Calu3 (cell line): ENCODE measurements at regions of chrX and their contacts with region 1.

Region 1: GRCh38 chrX:84046403-84046984 is 141.5 kb downstream of the RPS6KA6 start:
- DNase-seq: peak; percentile 32
- H3K4me3 Mint-ChIP-seq: no peak overlapping the region
- H3K27ac Mint-ChIP-seq: no peak overlapping the region
- H3K4me1 Mint-ChIP-seq: no peaks in the 10 kb centered on the region
- H3K27me3 Mint-ChIP-seq: no peaks in the 10 kb centered on the region
- CTCF ChIP-seq: peak; percentile 39

Region 2: DNA sequence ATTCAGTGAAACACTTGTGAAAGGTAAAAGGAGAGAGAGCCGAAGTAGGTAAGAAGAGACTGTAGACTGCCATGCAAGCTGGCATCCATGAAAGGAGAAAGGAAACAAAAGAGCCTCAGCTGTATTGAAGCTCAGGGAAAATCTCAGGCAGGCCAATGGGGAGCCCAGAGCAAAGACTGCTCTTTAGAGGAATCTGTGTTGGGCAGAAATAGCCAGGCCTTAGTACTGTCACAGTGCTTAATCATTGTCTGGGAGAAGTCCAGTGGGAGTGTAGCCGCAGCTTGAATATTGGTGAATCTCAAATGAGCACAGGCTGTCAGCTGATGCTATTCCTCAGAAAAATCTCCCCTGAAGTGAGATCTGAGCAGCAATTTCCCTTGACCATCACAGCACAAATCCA is 157.9 kb before region 1 on chrX:
- CTCF ChIA-PET with region 1: no interaction called
- intact Hi-C with region 1: no loop called
- DNase-seq: no peak
- H3K4me3 Mint-ChIP-seq: no peak overlapping the region
- H3K27ac Mint-ChIP-seq: no peak overlapping the region
- H3K4me1 Mint-ChIP-seq: no peaks in the 10 kb centered on the region
- H3K27me3 Mint-ChIP-seq: no peaks in the 10 kb centered on the region
- CTCF ChIP-seq: no peak

Region 3: GRCh38 chrX:83997781-83998180 is 48.7 kb before region 1 on chrX:
- CTCF ChIA-PET with region 1: no interaction called
- intact Hi-C with region 1: no loop called
- DNase-seq: no peak
- H3K4me3 Mint-ChIP-seq: no peak overlapping the region
- H3K27ac Mint-ChIP-seq: no peak overlapping the region
- H3K4me1 Mint-ChIP-seq: no peaks in the 10 kb centered on the region
- H3K27me3 Mint-ChIP-seq: no peaks in the 10 kb centered on the region
- CTCF ChIP-seq: no peak

Region 4: GRCh38 chrX:84108584-84108983 is 62.1 kb after region 1 on chrX:
- CTCF ChIA-PET with region 1: no interaction called
- intact Hi-C with region 1: no loop called
- DNase-seq: no peak
- H3K4me3 Mint-ChIP-seq: no peak overlapping the region
- H3K27ac Mint-ChIP-seq: no peak overlapping the region
- H3K4me1 Mint-ChIP-seq: no peaks in the 10 kb centered on the region
- H3K27me3 Mint-ChIP-seq: no peaks in the 10 kb centered on the region
- CTCF ChIP-seq: no peak

Region 5: DNA sequence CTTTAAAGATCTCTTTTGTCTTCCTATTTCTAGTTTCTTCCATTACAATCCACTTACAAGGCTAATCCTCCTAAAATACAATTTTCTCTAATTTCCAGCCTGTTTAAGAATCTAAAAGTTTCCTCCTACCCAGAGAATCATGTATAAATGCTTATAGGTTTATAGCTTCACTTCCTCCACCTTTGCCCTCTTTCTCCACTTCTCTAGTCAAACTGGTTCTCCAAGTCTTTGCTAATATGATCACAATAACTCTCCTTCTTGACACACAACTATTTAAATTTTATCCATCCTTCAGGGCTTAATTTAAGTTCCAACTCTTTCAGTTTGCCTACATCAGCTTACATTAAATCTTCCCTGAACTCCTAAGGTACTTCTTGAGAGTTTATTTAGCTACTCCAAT is 72.3 kb after region 1 on chrX:
- CTCF ChIA-PET with region 1: no interaction called
- intact Hi-C with region 1: loop called (anchors 5 kb)
- DNase-seq: peak; percentile 16
- H3K4me3 Mint-ChIP-seq: peak overlapping the region; percentile 43
- H3K27ac Mint-ChIP-seq: peak overlapping the region; percentile 79
- H3K4me1 Mint-ChIP-seq: peaks cover 15% of the 10 kb centered on the region
- H3K27me3 Mint-ChIP-seq: no peaks in the 10 kb centered on the region
- CTCF ChIP-seq: no peak

Region 6: DNA sequence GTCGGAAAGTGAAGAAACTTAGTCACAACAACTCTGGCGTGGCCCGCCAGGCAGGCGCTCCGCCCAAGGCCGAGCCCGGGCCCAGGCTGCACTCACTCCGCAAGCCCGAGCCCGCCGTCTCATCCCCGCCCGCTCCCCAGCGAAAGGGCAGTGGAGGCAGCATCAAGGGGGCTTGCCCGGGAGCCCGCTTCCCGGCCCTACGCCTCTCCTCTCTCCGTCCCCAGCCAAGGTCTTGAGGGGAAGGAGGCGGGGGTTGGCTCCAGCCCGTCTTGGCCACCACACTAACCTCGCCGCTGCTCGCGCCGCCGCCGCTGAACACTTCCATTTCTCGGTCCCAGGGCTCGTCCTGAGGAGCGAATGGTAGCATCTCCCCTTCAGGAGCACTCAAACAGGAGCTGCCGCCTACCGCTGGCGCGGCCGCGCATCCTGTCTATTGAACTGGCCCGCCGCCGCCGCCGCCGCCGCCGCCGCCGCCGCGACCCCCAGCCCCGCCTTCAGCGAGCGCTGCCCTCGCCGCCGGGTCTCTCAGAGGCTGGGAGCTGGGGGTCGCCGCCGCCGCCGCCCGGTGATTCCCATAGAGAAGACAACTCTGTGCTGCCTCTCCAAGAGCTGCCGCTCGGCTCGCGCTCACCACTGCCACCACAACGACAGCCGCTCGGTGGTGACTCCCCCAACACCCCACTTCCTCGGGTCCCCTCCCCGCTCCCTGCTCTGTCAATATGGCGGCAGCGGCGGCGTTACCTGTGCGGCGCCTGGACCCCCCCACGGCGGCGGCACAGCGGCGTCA is 141.2 kb after region 1 on chrX and contains the start of gene RPS6KA6:
- CTCF ChIA-PET with region 1: interaction called, 4 read pairs
- intact Hi-C with region 1: loop called (anchors 2 kb)
- DNase-seq: peak; percentile 34
- H3K4me3 Mint-ChIP-seq: peak within 1 kb of the TSS; percentile 76
- H3K27ac Mint-ChIP-seq: peak within 1 kb of the TSS; percentile 50
- H3K4me1 Mint-ChIP-seq: no peaks in the 10 kb centered on the region
- H3K27me3 Mint-ChIP-seq: no peaks in the 10 kb centered on the region
- CTCF ChIP-seq: no peak
- total RNA-seq, gene RPS6KA6: 3.0 and 3.8 TPM in 2 replicates

Region 7: DNA sequence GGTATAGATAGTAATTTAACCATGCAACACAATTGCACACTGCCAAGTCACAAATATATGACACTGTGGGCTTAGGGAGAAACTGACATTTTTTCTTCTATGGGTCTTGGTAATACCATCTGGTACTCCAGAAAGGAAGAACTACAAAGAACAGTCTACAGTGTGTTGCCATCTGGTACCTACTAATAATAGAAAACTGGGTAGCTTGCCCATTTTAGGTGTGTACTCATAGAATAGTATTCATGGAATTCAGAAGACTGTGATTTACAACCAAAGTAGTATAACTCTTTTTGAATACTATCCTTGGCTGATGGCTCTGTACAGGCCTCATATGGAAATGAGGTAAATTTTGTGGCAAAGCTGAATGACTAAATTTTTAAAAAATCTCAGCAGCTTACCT is 274.1 kb after region 1 on chrX:
- CTCF ChIA-PET with region 1: no interaction called
- intact Hi-C with region 1: loop called (anchors 10 kb)
- DNase-seq: no peak
- H3K4me3 Mint-ChIP-seq: no peak overlapping the region
- H3K27ac Mint-ChIP-seq: no peak overlapping the region
- H3K4me1 Mint-ChIP-seq: no peaks in the 10 kb centered on the region
- H3K27me3 Mint-ChIP-seq: no peaks in the 10 kb centered on the region
- CTCF ChIP-seq: no peak